AG04449 (cell line): ENCODE measurements at regions of chr11 and their contacts with region 1.

Region 1: GRCh38 chr11:35391922-35392813 is 27.2 kb downstream of the SLC1A2 start:
- DNase-seq: peak; percentile 31
- H3K4me3 ChIP-seq: no peak overlapping the region
- CTCF ChIP-seq: peak; percentile 85

Region 2: DNA sequence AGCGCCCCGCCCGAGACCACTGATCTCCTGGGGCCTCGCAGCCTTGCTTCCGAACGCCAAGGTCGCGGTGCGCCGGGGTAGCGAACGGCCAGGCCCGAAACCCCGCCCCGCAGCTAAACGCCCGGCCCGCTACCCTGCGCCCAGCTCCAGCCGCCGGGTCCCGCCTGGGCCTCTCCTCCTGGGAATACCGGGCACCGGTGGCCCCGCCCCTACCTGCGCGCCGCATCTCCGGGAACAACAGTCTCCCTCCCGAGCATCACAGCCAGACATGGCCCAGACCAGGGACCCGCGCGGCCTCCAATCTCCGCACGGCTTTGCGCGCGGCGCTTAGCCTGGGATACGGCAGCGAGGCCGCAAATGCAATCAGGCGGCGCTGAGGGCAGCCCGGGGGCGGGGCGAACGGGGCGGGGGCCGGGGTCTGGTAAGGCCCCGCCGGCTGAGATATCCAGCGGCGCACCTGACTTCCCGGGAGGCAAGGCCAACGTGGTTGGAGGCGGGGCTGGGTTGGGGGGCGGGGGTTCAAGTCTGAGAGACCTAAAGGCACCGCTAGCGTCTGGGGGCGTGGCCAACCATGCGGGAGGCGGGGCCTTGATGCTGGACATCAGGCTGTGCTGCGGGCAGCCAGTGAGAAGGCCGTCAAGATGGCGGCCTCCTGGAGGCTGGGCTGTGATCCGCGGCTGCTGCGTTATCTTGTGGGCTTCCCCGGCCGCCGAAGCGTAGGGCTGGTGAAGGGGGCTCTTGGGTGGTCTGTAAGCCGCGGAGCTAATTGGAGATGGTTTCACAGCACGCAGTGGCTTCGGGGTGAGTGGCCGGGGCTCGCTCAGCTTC is 475.9 kb before region 1 on chr11 and contains the starts of genes APIP and PDHX:
- CTCF ChIA-PET with region 1: interaction called, 27 read pairs
- POLR2A ChIA-PET with region 1: no interaction called
- DNase-seq: peak; percentile 87
- H3K4me3 ChIP-seq: peak within 1 kb of the TSS; percentile 91
- CTCF ChIP-seq: no peak

Region 3: GRCh38 chr11:34997952-34998528 is 394.1 kb before region 1 on chr11:
- CTCF ChIA-PET with region 1: interaction called, 24 read pairs
- POLR2A ChIA-PET with region 1: no interaction called
- DNase-seq: no peak
- H3K4me3 ChIP-seq: no peak overlapping the region
- CTCF ChIP-seq: no peak

Region 4: DNA sequence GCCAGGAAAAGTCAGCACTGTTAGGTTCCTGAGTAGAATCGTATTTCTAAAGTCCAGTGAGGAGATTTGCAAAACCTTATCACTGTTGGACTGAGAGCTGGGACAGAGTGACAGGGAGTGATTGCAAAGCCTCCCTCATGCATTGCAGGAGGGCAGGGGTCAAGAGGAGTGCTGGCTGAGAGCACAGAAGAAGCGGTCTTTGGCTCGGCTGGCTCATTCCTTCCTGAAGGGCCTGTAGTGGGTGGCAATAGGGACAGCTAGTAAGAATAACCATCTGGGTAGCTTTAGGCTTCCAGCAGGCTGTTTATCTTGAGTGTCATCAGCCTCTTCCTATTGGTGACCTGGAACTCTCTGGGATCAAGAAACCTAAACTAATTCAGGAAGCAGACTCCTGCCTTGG is 199.8 kb before region 1 on chr11:
- CTCF ChIA-PET with region 1: no interaction called
- POLR2A ChIA-PET with region 1: no interaction called
- DNase-seq: no peak
- H3K4me3 ChIP-seq: no peak overlapping the region
- CTCF ChIP-seq: no peak

Region 5: GRCh38 chr11:35367491-35367890 is 24.7 kb before region 1 on chr11:
- CTCF ChIA-PET with region 1: interaction called, 12 read pairs
- POLR2A ChIA-PET with region 1: no interaction called
- DNase-seq: no peak
- H3K4me3 ChIP-seq: no peak overlapping the region
- CTCF ChIP-seq: no peak

Region 6: DNA sequence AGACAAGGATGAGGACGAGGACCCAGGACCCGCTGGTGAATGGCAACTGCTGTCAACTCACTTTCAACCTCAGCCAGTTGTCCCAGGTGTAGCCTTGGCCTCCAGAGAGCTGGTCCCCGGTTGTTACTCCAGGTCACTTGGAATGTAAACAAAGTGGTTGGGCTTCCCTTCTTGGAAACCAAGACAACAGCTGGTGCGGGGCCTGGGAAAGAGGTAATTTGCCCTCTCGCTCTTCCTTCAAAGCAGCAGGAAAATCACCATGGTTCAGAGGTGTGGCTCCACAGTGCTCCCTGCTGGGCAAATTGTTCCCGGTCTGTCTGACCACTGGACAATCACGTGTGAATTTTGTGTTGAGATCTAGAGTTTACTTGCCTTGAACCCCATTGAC is 12.2 kb after region 1 on chr11:
- CTCF ChIA-PET with region 1: interaction called, 34 read pairs
- POLR2A ChIA-PET with region 1: no interaction called
- DNase-seq: no peak
- H3K4me3 ChIP-seq: no peak overlapping the region
- CTCF ChIP-seq: peak; percentile 47